Sciatic nerve (tissue), 2 donors: ENCODE measurements at regions of chrX and their contacts with region 1.

Region 1: DNA sequence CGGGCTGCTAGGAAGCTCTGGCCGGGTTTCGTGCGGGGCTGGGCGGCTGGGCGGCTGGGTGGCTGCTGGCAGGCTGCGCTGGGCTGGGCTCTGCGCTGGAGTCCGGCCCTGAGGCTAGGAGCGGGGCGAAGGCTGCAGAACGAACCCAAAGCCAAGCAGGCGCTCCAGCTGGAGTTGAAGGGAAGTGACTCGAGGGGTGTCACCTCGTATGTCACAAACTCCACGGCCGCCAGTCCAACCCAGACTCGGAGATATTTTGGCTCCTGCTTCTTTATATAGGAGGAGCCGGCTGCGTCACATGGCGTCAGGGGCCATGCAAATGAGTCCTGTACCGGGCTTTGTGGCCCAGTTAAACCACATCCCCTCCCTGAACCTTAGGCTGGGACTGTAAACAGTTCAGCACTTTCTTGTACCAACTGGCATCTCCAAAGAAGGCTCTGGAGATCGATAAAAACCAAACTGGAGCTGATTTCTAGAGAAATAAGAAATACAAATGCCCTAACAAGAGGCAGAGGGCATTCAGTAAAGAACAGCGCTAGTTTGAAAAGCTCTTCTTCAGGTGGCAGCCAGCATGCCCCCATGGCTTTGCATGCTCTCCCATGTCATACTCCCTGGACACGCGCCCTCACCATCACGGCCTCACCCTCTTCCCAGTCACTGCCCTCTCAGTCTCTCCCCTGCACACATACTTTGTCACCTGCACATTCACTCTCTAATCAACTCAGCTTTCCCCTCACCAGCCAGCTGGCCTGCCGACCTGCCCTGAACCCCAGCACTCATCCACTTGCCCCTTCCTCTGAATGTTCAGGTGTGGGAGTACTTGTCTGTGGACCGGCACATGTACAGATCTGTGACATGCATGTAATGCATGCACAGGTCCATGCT is 58.5 kb downstream of the TSC22D3 start:
- DNase-seq: peak; percentile 90
- ATAC-seq: peak; percentile 78

Region 2: DNA sequence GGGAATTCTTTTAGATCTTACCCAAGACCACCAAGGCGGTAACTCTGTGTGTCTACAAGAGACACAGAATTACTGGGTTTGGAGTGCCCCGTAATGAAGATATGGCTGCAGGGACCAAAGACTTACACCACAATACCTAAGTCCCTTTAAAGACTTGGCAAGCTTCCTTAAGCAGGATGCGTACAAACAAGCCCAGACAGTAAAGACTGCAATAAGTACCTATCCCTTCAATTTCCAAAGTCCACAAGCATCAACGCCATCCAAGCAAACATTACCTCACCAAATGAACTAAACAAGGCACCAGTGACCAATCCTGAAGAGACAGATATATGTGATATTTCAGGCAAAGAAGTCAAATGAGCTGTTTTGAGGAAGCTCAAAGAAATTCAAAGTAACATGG is 1032.9 kb before region 1 on chrX:
- intact Hi-C with region 1: no loop called
- DNase-seq: no peak
- ATAC-seq: no peak

Region 3: DNA sequence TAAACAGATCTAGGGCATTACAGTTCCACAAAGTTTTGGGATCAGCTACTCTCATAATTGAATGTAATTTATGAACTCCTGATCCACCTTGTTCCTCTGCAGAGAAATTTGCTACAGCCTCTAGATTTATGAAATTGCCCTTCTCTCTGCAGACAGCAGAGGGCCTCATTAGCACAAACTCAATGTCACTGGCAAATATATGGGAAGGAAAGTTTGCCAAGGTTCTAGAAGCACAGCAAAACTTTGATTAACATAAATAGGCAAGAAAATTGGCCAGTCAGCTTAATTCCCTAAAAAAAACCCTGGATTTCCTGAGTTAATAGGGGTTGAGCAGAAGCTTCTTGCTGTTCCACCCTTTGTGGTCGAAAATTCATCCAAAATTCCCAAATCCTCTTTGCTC is 57.3 kb before region 1 on chrX:
- intact Hi-C with region 1: loop called (anchors 10 kb)
- DNase-seq: no peak
- ATAC-seq: peak; percentile 49